ENCODE measurements at regions of chr6 and their contacts with region 1.

Region 1: GRCh38 chr6:145809211-145809610 is 5.4 kb downstream of the FBXO30 start:
- DNase-seq: no peak
- H3K4me3 ChIP-seq: no peak overlapping the region
- H3K27ac ChIP-seq: no peak overlapping the region
- H3K4me1 ChIP-seq: peaks cover 13 to 51% (median 37%) of the 10 kb centered on the region in 6 donors
- H3K27me3 ChIP-seq: no peaks in the 10 kb centered on the region
- CTCF ChIP-seq: no peak
- POLR2A ChIP-seq: no peak

Region 2: DNA sequence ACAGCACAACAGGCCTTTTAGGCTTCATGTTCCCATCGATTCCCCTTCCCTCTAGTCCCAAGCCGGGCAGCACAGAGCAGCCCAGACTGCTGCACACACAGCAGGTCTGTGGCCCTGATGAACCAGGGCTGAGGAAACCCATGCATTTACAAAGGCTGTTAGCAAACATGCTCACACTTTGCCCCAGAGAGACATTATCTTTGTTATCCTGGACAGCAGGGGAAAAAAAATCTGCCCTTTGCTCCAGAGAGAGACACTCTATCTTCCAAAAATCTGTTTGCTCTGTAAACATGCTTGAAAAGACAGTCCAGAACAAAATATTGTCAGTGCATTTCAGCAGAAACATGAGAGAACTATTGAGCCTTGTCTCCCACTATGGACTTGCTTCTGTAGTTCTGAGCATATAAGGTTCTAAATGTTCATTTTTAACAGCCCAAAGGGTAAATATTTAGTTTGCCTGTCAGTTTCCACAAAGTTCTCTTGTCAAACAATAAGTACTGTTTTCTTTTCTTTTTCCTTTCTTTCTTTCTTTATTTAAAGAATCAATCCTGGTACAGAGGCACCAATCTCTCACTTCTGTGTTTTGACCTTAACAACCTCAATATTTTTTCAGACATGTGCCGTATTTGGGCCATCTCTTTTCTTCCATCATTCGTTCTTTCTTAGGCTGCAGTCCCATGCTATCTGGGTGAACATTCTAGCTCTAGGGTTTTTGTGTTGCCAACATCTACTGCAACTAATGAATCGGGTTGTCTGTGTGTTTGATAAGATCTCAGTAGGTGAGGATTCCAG is 541.9 kb before region 1 on chr6:
- intact Hi-C with region 1: no loop called
- DNase-seq: no peak
- H3K4me3 ChIP-seq: no peak overlapping the region
- H3K27ac ChIP-seq: no peak overlapping the region
- H3K4me1 ChIP-seq: no peaks in the 10 kb centered on the region
- H3K27me3 ChIP-seq: no peaks in the 10 kb centered on the region
- CTCF ChIP-seq: no peak
- POLR2A ChIP-seq: no peak

Region 3: GRCh38 chr6:145315982-145316600 is 493.1 kb before region 1 on chr6:
- intact Hi-C with region 1: no loop called
- DNase-seq: no peak
- H3K4me3 ChIP-seq: no peak overlapping the region
- H3K27ac ChIP-seq: no peak overlapping the region
- H3K4me1 ChIP-seq: no peaks in the 10 kb centered on the region
- H3K27me3 ChIP-seq: no peaks in the 10 kb centered on the region
- CTCF ChIP-seq: no peak
- POLR2A ChIP-seq: no peak

Region 4: GRCh38 chr6:145734486-145735355 is 74.5 kb before region 1 on chr6:
- intact Hi-C with region 1: no loop called
- DNase-seq: peak; percentile 95
- H3K4me3 ChIP-seq: peak overlapping the region; percentile 45 to 96 (median 80)
- H3K27ac ChIP-seq: peak overlapping the region; percentile 81 to 98 (median 94)
- H3K4me1 ChIP-seq: peaks cover 7 to 44% (median 23%) of the 10 kb centered on the region in 6 donors
- H3K27me3 ChIP-seq: no peaks in the 10 kb centered on the region
- CTCF ChIP-seq: no peak
- POLR2A ChIP-seq: no peak

Region 5: GRCh38 chr6:145749632-145750031 is 59.6 kb before region 1 on chr6:
- intact Hi-C with region 1: loop called (anchors 10 kb)
- DNase-seq: no peak
- H3K4me3 ChIP-seq: no peak overlapping the region
- H3K27ac ChIP-seq: no peak overlapping the region
- H3K4me1 ChIP-seq: no peaks in the 10 kb centered on the region
- H3K27me3 ChIP-seq: no peaks in the 10 kb centered on the region
- CTCF ChIP-seq: no peak
- POLR2A ChIP-seq: no peak

Region 6: GRCh38 chr6:145948328-145948727 is 139.1 kb after region 1 on chr6:
- intact Hi-C with region 1: no loop called
- DNase-seq: no peak
- H3K4me3 ChIP-seq: no peak overlapping the region
- H3K27ac ChIP-seq: no peak overlapping the region
- H3K4me1 ChIP-seq: no peaks in the 10 kb centered on the region
- H3K27me3 ChIP-seq: no peaks in the 10 kb centered on the region
- CTCF ChIP-seq: no peak
- POLR2A ChIP-seq: no peak

Measured in spleen (tissue), 13 donors.